B cell (primary cell): ENCODE measurements at regions of chr7 and their contacts with region 1.

Region 1: GRCh38 chr7:36784991-36785940 is 61.0 kb upstream of the AOAH start:
- DNase-seq: peak; percentile 83
- ATAC-seq: peak; percentile 98
- H3K4me3 ChIP-seq: no peak overlapping the region
- H3K4me3 Mint-ChIP-seq: peak overlapping the region; percentile 63
- H3K27ac ChIP-seq: no peak overlapping the region
- H3K27ac Mint-ChIP-seq: peak overlapping the region; percentile 72
- H3K4me1 ChIP-seq: peaks cover 10 to 13% of the 10 kb centered on the region in 2 donors
- H3K4me1 Mint-ChIP-seq: peaks cover 24% of the 10 kb centered on the region
- H3K27me3 ChIP-seq: no peaks in the 10 kb centered on the region
- H3K27me3 Mint-ChIP-seq: peaks cover 15% of the 10 kb centered on the region
- CTCF ChIP-seq: peak; percentile 20

Region 2: GRCh38 chr7:36670585-36671431 is 114.5 kb before region 1 on chr7:
- CTCF ChIA-PET with region 1: no interaction called
- POLR2A ChIA-PET with region 1: no interaction called
- intact Hi-C with region 1: loop called (anchors 10 kb)
- DNase-seq: peak; percentile 67
- ATAC-seq: peak; percentile 63
- H3K4me3 ChIP-seq: no peak overlapping the region
- H3K4me3 Mint-ChIP-seq: no peak overlapping the region
- H3K27ac ChIP-seq: no peak overlapping the region
- H3K27ac Mint-ChIP-seq: no peak overlapping the region
- H3K4me1 ChIP-seq: no peaks in the 10 kb centered on the region
- H3K4me1 Mint-ChIP-seq: peaks cover 3% of the 10 kb centered on the region
- H3K27me3 ChIP-seq: no peaks in the 10 kb centered on the region
- H3K27me3 Mint-ChIP-seq: peaks cover 3% of the 10 kb centered on the region
- CTCF ChIP-seq: peak; percentile 78

Region 3: DNA sequence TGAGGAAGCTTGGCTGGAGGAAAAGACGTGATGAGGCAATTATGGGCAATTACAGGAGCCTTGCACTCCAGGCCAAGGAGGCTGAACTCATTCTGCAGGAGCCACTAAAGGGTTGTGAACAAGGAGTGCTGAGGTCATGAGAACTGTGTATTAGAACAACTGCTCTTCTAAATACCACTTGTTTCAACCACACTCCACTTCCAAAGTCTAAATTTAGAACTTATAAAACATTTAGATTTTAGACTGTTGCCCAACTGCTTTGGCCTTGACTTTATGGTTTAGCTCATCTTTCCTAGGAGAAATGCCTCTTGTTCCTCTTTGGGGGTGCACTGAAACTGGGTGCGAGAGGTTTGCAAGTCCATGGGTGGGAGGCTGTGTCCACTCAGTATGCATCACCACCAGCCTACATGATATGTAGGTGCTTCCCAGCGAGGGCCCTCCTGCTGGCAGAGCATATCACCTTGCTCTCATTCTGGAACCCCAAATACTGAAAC is 138.7 kb after region 1 on chr7:
- CTCF ChIA-PET with region 1: no interaction called
- POLR2A ChIA-PET with region 1: no interaction called
- intact Hi-C with region 1: no loop called
- DNase-seq: no peak
- ATAC-seq: no peak
- H3K4me3 ChIP-seq: no peak overlapping the region
- H3K4me3 Mint-ChIP-seq: no peak overlapping the region
- H3K27ac ChIP-seq: no peak overlapping the region
- H3K27ac Mint-ChIP-seq: no peak overlapping the region
- H3K4me1 ChIP-seq: no peaks in the 10 kb centered on the region
- H3K4me1 Mint-ChIP-seq: no peaks in the 10 kb centered on the region
- H3K27me3 ChIP-seq: no peaks in the 10 kb centered on the region
- H3K27me3 Mint-ChIP-seq: no peaks in the 10 kb centered on the region
- CTCF ChIP-seq: no peak

Region 4: GRCh38 chr7:36999626-37000485 is 214.6 kb after region 1 on chr7:
- CTCF ChIA-PET with region 1: no interaction called
- POLR2A ChIA-PET with region 1: no interaction called
- intact Hi-C with region 1: no loop called
- DNase-seq: no peak
- ATAC-seq: no peak
- H3K4me3 ChIP-seq: no peak overlapping the region
- H3K4me3 Mint-ChIP-seq: no peak overlapping the region
- H3K27ac ChIP-seq: no peak overlapping the region
- H3K27ac Mint-ChIP-seq: no peak overlapping the region
- H3K4me1 ChIP-seq: no peaks in the 10 kb centered on the region
- H3K4me1 Mint-ChIP-seq: no peaks in the 10 kb centered on the region
- H3K27me3 ChIP-seq: no peaks in the 10 kb centered on the region
- H3K27me3 Mint-ChIP-seq: no peaks in the 10 kb centered on the region
- CTCF ChIP-seq: no peak